Calu3 (cell line): ENCODE measurements at regions of chr3 and their contacts with region 1.

Region 1: DNA sequence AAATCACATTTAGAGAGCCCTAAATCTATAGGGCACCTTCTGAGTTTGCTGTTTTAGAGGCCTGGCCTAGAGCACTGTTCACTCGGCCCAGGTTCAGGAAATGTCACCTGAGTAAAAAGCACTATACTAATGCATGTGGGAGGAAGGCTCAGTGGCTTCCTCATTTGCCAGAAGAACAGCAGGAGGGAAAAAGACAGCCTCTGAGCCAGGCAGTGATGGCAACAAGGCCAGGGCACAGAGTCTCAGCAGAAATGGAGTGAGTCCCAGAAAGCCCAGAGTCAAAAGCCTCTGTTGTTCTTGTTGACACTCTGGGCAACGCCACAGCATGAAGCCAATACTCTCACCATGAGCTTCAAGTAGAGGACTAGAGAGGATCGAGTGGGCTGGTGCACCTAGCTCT is 25.9 kb downstream of the LTF start:
- DNase-seq: no peak
- H3K4me3 Mint-ChIP-seq: no peak overlapping the region
- H3K27ac Mint-ChIP-seq: no peak overlapping the region
- H3K4me1 Mint-ChIP-seq: no peaks in the 10 kb centered on the region
- H3K27me3 Mint-ChIP-seq: peaks cover 17% of the 10 kb centered on the region
- CTCF ChIP-seq: no peak

Region 2: DNA sequence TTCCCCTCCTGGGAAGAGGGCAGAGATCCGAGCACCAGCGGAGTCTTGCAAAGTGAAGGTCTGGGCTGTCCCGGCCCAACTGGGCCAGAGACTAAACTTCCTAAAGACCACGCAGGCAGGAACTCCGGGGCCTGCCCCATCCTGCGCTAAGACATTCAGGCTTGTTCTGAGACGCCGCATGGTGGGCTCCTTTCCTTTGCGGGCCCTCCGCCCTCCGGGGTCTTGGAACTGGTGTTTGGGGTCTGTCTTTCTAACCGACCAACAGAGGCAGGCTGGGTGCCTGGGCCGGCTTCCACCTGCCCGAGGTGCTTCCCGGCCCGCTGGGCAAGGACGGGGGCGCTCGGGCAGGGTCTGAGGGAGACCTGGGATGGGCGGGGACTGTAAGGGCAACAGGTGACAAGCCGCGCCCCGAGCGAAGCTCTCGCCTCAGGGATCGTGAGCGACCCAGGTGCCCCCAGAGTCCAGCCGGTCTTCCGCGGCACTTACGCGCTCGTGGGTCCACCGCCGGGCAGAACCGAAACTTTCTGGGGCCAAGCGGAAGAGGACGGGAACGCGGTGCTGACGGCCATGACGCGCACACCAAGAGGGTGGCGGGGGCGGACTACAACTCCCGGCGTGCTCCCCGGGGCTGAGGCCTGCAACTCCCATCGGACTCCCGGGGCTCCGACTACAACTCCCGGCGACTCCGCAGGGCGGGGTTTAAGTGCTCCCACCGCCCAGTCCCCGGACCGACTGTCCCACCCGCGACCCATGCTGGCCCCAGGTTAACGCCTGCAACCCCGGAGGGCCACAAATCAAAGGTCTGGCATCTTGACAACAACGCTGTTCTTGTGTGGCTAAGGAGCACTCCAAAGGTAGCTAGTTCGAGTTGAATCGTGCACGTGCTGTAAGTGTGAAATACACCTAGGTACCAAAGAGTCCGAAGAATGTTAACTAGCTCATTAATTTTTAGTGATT is 443.3 kb before region 1 on chr3 and contains the start of gene FYCO1:
- CTCF ChIA-PET with region 1: no interaction called
- intact Hi-C with region 1: no loop called
- DNase-seq: peak; percentile 93
- H3K4me3 Mint-ChIP-seq: peak within 1 kb of the TSS; percentile 80
- H3K27ac Mint-ChIP-seq: no peak within 1 kb of the TSS
- H3K4me1 Mint-ChIP-seq: no peaks in the 10 kb centered on the region
- H3K27me3 Mint-ChIP-seq: peaks cover 37% of the 10 kb centered on the region
- CTCF ChIP-seq: no peak
- total RNA-seq, gene FYCO1: 24.5 and 26.7 TPM in 2 replicates

Region 3: DNA sequence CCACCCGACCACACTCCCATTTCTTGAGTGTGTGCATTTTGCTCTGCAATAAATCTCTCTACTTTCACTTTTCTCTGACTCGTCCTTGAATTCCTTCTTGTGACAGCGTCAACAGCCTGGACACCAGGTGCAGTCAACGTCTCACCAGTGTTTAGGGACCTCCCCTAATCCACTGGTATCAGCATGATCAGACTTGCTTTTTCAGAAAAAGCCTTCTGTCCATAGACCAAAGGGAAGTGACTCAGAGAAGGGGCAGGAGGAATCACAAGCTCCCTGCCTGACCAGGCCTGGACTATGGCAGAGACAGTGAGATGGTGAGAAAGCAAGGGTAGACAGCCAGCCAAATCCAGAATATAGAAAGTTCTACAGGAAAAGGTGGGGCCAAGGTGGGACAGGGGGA is 52.6 kb before region 1 on chr3:
- CTCF ChIA-PET with region 1: no interaction called
- intact Hi-C with region 1: loop called (anchors 10 kb)
- DNase-seq: peak; percentile 30
- H3K4me3 Mint-ChIP-seq: no peak overlapping the region
- H3K27ac Mint-ChIP-seq: peak overlapping the region; percentile 48
- H3K4me1 Mint-ChIP-seq: peaks cover 18% of the 10 kb centered on the region
- H3K27me3 Mint-ChIP-seq: peaks cover 21% of the 10 kb centered on the region
- CTCF ChIP-seq: no peak